ENCODE measurements at regions of chr6 and their contacts with region 1.

Region 1: DNA sequence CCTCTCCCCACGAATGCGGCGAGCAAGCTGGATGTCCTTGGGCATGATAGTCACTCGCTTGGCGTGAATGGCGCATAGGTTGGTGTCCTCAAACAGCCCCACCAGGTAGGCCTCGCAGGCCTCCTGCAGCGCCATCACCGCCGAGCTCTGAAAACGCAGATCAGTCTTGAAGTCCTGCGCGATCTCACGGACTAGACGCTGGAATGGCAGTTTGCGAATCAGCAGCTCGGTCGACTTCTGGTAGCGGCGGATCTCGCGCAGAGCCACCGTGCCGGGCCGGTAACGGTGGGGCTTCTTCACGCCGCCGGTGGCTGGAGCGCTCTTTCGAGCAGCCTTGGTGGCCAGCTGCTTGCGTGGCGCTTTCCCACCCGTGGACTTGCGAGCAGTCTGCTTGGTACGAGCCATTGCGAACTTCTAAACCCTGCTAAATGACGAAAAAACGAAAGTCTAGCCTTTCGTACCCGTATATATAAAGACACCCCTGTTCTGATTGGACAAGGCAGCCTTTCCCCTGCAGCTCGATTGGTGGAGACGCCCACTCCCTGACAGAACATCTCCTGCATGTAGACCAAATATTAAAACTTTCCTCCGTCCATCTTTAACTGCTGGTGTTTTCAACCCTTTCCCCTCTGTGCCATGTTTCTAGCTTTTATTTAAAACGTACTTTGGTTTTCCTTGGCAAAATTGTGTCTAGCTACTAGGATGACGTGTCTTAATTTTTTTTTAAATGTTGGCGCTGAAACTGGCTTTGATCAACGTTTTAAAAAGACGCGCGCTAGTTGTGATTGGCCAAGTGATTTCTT is 109.8 kb downstream of the HFE start:
- DNase-seq: peak; percentile 83
- ATAC-seq: peak; percentile 44
- H3K4me3 Mint-ChIP-seq: peak overlapping the region; percentile 87
- H3K27ac Mint-ChIP-seq: peak overlapping the region; percentile 96
- H3K4me1 Mint-ChIP-seq: peaks cover 48% of the 10 kb centered on the region
- H3K27me3 Mint-ChIP-seq: no peaks in the 10 kb centered on the region

Region 2: DNA sequence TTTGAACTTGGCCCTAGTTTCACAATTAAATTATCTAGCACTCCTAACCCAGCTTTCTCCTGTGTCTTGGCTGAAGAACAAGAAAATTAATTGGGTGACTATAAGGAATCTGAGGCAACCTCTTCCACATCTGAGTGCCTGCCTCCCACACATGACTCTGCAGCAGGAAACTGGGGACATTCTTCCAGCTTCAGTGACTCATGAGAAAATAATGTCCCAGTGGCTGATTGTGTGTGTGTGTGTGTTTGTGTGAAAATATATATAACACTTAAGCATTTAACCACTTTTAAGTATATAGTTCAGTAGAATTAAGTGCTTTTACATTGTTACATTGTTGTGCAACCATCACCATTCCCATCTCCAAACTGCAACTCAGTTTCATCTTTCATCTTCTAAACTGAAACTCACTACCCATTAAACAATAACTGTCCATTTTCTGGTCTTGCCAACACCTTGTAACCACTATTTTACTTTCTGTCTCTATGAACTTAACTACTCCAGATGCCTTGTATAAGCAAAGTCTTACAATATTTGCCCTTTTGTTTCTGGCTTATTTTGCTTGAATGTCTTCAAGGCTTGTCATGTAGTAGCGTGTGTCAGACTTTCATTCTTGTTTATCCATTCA is 225.7 kb before region 1 on chr6:
- POLR2A ChIA-PET with region 1: no interaction called
- DNase-seq: no peak
- ATAC-seq: no peak
- H3K4me3 Mint-ChIP-seq: no peak overlapping the region
- H3K27ac Mint-ChIP-seq: no peak overlapping the region
- H3K4me1 Mint-ChIP-seq: peaks cover 34% of the 10 kb centered on the region
- H3K27me3 Mint-ChIP-seq: no peaks in the 10 kb centered on the region

Region 3: GRCh38 chr6:26175428-26176181 is 21.4 kb before region 1 on chr6:
- POLR2A ChIA-PET with region 1: interaction called, 208 read pairs
- DNase-seq: no peak
- ATAC-seq: no peak
- H3K4me3 Mint-ChIP-seq: peak overlapping the region; percentile 54
- H3K27ac Mint-ChIP-seq: peak overlapping the region; percentile 76
- H3K4me1 Mint-ChIP-seq: peaks cover 41% of the 10 kb centered on the region
- H3K27me3 Mint-ChIP-seq: no peaks in the 10 kb centered on the region

Region 4: DNA sequence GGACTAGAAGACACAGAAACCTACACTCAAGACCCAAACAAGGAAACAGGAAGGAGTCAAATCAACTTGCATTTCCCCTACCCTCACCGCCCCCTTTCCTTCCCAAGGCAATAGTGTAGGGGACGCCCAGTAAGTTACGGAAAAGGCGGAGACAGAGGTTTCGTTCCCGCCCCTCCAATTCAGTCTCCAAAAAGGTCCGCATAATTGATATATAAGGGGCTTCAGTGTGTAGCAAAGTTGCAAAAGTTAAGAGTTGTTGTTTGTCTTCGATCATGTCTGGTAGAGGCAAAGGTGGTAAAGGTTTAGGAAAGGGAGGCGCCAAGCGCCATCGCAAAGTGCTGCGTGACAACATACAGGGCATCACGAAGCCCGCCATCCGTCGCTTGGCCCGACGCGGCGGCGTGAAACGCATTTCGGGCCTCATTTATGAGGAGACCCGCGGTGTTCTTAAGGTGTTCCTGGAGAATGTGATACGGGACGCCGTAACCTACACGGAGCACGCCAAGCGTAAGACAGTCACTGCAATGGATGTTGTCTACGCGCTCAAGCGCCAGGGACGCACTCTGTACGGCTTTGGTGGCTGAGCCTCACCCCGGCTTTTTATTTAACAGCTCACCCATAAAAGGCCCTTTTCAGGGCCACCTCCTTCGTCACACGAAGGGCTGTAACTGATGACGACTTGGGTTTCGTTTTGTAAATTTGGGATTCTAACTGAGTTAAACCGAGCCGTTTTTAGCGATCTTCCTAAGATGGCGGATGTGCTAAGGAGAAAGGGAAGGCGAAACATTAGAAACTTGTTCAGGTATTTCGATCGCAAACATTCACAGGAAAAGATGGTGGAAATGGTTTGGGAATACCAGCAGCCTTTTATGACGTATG is 43.3 kb after region 1 on chr6:
- POLR2A ChIA-PET with region 1: interaction called, 494 read pairs
- DNase-seq: peak; percentile 81
- ATAC-seq: peak; percentile 82
- H3K4me3 Mint-ChIP-seq: peak overlapping the region; percentile 85
- H3K27ac Mint-ChIP-seq: peak overlapping the region; percentile 98
- H3K4me1 Mint-ChIP-seq: peaks cover 36% of the 10 kb centered on the region
- H3K27me3 Mint-ChIP-seq: no peaks in the 10 kb centered on the region

Region 5: GRCh38 chr6:26260725-26261490 is 63.9 kb after region 1 on chr6:
- POLR2A ChIA-PET with region 1: no interaction called
- DNase-seq: no peak
- ATAC-seq: no peak
- H3K4me3 Mint-ChIP-seq: no peak overlapping the region
- H3K27ac Mint-ChIP-seq: no peak overlapping the region
- H3K4me1 Mint-ChIP-seq: peaks cover 4% of the 10 kb centered on the region
- H3K27me3 Mint-ChIP-seq: peaks cover 4% of the 10 kb centered on the region

Region 6: DNA sequence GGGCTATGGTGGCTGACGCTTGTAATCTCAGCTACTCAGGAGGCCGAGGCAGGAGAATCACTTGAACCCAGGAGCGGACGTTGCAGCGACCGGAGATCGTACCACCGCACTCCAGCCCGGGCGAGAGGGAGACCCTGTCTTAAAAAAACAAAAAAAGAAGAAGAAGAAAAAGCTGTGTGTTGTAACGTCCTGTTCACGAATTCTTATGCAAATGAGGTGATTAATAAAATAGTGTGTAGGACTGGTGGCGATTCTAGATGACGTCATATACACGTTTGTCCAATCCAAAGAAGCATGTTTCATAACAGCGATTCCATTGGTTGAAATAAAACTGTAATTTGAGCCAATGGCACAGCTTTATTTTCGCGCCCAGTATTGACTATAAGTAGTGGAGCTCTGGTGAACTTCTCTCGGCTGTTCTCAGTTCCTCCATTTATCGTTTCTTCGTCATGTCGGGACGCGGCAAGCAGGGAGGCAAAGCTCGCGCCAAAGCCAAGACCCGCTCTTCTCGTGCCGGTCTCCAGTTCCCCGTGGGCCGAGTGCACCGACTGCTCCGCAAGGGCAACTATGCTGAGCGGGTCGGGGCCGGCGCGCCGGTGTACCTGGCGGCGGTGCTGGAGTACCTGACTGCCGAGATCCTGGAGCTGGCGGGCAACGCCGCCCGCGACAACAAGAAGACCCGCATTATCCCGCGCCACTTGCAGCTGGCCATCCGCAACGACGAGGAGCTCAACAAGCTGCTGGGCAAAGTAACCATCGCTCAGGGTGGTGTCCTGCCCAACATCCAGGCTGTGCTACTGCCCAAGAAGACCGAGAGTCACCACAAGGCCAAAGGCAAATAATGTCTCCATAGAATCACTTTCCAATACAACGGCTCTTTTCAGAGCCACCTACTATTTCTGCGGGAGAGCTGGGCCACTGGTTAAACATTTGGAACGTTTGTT is 1668.1 kb after region 1 on chr6:
- POLR2A ChIA-PET with region 1: interaction called, 84 read pairs
- DNase-seq: peak; percentile 83
- ATAC-seq: peak; percentile 56
- H3K4me3 Mint-ChIP-seq: peak overlapping the region; percentile 99
- H3K27ac Mint-ChIP-seq: peak overlapping the region; percentile 100
- H3K4me1 Mint-ChIP-seq: peaks cover 57% of the 10 kb centered on the region
- H3K27me3 Mint-ChIP-seq: no peaks in the 10 kb centered on the region